Activated CD8-positive, alpha-beta T cell treated with anti-CD3 and anti-CD28 coated beads for 36 hours (primary cell): ENCODE measurements at regions of chrX and their contacts with region 1.

Region 1: DNA sequence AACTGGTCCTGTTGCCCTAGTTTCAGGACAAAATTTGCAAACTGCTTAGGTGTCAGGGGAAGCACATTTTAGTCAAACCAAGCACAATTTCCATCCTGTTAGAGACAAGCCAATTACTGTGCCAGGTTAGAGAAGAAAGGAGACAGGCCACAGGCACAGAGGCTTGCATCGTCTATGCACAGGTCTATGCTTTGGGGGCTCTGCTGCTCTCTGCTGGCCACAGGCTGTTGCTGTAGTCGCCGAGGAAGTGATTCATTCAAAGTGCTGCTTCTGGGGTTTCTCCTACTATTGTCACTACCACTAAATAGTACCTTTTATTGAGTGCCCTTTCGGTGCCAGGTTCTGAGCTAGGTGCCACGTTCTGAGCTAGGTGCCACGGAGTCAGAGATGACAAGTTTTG is 45.5 kb downstream of the VGLL1 start:
- DNase-seq: peak; percentile 83
- ATAC-seq: peak; percentile 98
- H3K4me3 Mint-ChIP-seq: no peak overlapping the region
- H3K27ac Mint-ChIP-seq: peak overlapping the region; percentile 44
- H3K4me1 Mint-ChIP-seq: peaks cover 32% of the 10 kb centered on the region
- H3K27me3 Mint-ChIP-seq: no peaks in the 10 kb centered on the region
- CTCF ChIP-seq: peak; percentile 57

Region 2: DNA sequence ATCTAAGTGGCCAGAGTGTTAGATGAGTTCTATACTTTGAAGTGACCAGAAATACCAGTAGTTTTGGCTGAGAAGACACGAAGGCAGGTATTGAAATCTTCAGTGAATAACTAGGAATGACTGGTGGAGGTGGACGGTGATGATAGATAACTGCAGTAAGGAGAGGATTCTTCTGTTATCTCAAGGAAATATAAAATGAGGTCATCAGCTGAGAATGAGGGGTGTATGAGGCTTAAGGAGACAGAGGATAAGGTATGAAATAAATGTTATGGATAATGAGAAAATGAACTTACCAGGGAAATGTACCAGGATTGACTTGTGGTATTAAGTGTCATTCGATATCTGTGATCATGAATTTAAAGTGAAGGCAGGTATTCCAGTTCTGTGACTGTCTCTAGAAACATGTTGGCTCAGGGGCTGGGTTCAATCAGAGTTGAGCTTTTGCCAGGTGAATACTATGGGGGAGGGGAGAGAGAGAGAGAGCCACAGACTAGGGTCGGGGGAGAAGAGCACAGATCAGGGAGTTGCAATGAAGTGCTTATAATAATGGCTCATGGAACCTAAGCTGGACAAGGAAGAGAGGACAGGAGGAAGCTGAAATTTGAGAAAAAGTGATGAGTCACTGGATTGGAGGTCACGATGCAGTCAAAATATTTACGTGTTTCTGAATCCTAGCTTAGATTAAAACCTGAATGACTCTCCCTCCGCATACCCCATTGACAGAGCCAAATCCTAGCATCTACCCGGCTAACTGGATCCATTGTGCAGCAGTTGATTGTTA is 127.3 kb before region 1 on chrX:
- CTCF ChIA-PET with region 1: no interaction called
- POLR2A ChIA-PET with region 1: no interaction called
- intact Hi-C with region 1: no loop called
- DNase-seq: no peak
- ATAC-seq: no peak
- H3K4me3 Mint-ChIP-seq: no peak overlapping the region
- H3K27ac Mint-ChIP-seq: no peak overlapping the region
- H3K4me1 Mint-ChIP-seq: no peaks in the 10 kb centered on the region
- H3K27me3 Mint-ChIP-seq: no peaks in the 10 kb centered on the region
- CTCF ChIP-seq: no peak

Region 3: DNA sequence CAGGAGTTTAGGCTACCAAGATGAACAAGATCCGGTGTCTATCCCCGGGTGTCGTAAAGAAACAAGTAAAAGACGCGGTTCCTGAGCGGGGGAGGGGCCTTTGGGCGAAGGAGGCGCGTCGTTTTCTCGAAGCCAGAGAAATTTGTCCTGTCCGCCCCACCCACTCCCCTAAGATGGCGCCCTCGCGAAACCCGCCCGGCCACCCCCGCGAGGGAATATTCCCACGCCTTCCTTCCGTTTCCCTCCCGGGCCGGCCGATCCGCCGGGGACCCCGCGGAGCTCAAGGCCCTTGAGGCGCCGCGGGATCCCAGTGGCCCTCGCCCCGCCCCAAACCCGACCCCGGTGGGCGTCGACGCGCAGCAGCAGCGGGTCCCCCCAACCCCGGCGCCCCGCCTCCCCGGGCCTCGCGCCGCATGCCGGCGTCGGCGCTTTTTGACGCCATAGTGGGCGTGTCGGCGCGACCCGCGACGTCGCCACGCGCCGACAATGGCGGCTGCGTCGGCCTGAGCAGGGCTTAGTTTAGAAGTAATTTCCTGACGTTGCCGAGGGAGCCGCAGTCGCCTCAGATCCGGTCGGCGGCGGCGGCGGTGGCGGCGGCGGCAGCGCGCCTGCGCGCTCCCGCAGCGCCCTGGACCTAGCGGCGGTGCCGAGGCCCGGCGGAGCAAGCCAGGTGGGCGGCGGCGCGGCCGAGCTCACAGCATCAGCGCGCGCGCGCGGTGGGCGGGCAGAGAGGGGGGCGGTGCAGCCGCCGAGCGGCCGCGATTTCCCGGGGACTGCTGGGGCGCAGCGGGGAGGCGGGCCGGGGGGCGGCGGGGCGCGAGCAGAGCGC is 80.6 kb before region 1 on chrX and contains the start of gene HTATSF1:
- CTCF ChIA-PET with region 1: interaction called, 6 read pairs
- POLR2A ChIA-PET with region 1: no interaction called
- intact Hi-C with region 1: loop called (anchors 5 kb)
- DNase-seq: peak; percentile 93
- ATAC-seq: peak; percentile 81
- H3K4me3 Mint-ChIP-seq: peak within 1 kb of the TSS; percentile 95
- H3K27ac Mint-ChIP-seq: peak within 1 kb of the TSS; percentile 95
- H3K4me1 Mint-ChIP-seq: peaks cover 10% of the 10 kb centered on the region
- H3K27me3 Mint-ChIP-seq: no peaks in the 10 kb centered on the region
- CTCF ChIP-seq: no peak
- total RNA-seq, gene HTATSF1: 33.0 to 35.4 TPM

Region 4: GRCh38 chrX:136616987-136617685 is 39.6 kb after region 1 on chrX:
- CTCF ChIA-PET with region 1: interaction called, 16 read pairs
- POLR2A ChIA-PET with region 1: no interaction called
- intact Hi-C with region 1: no loop called
- DNase-seq: peak; percentile 44
- ATAC-seq: peak; percentile 87
- H3K4me3 Mint-ChIP-seq: peak overlapping the region; percentile 21
- H3K27ac Mint-ChIP-seq: peak overlapping the region; percentile 86
- H3K4me1 Mint-ChIP-seq: peaks cover 55% of the 10 kb centered on the region
- H3K27me3 Mint-ChIP-seq: no peaks in the 10 kb centered on the region
- CTCF ChIP-seq: no peak

Region 5: DNA sequence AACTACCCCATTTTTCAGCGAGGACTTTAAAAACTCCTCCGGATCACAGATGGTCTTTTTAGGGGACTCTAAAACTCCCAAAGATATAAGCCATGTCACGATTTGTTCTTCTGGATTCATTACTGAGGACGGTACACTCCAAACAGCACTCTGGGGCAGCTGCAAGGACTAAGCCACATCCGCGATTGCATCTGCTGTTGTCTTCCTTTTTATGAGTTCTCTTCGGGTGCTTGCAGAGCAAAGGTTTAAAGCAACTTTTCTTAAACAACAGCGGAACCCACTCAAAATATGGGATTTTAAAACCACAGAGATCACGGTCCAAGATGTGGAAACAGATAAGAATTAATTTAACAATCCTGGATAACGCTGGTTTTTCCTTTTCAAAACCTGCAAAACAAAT is 203.2 kb after region 1 on chrX and contains the start of gene ARHGEF6:
- CTCF ChIA-PET with region 1: no interaction called
- POLR2A ChIA-PET with region 1: no interaction called
- intact Hi-C with region 1: no loop called
- DNase-seq: peak; percentile 57
- ATAC-seq: peak; percentile 57
- H3K4me3 Mint-ChIP-seq: peak within 1 kb of the TSS; percentile 77
- H3K27ac Mint-ChIP-seq: peak within 1 kb of the TSS; percentile 99
- H3K4me1 Mint-ChIP-seq: peaks cover 53% of the 10 kb centered on the region
- H3K27me3 Mint-ChIP-seq: no peaks in the 10 kb centered on the region
- CTCF ChIP-seq: no peak
- total RNA-seq, gene ARHGEF6: 45.7 to 45.8 TPM